ENCODE measurements at regions of chr12 and their contacts with region 1.

Region 1: GRCh38 chr12:125065021-125065795 is at the start of gene AACS:
- DNase-seq: peak; percentile 66 to 89 (median 74)
- ATAC-seq: peak; percentile 95
- H3K4me3 ChIP-seq: peak within 1 kb of the TSS; percentile 64
- H3K4me3 Mint-ChIP-seq: peak within 1 kb of the TSS; percentile 93
- H3K27ac ChIP-seq: no peak within 1 kb of the TSS
- H3K27ac Mint-ChIP-seq: peak within 1 kb of the TSS; percentile 30
- H3K4me1 ChIP-seq: peaks cover 18% of the 10 kb centered on the region
- H3K4me1 Mint-ChIP-seq: peaks cover 20% of the 10 kb centered on the region
- H3K27me3 ChIP-seq: no peaks in the 10 kb centered on the region
- H3K27me3 Mint-ChIP-seq: no peaks in the 10 kb centered on the region
- CTCF ChIP-seq: no peak
- total RNA-seq, gene AACS: 10.8 to 11.7 TPM

Region 2: GRCh38 chr12:124863416-124864325 is 201.5 kb before region 1 on chr12 and contains the start of gene SCARB1:
- CTCF ChIA-PET with region 1: no interaction called
- POLR2A ChIA-PET with region 1: no interaction called
- intact Hi-C with region 1: loop called in 1 of 2 experiments (anchors 10 kb)
- DNase-seq: peak; percentile 53 to 88 (median 71)
- ATAC-seq: peak; percentile 89
- H3K4me3 ChIP-seq: peak within 1 kb of the TSS; percentile 51
- H3K4me3 Mint-ChIP-seq: peak within 1 kb of the TSS; percentile 91
- H3K27ac ChIP-seq: no peak within 1 kb of the TSS
- H3K27ac Mint-ChIP-seq: peak within 1 kb of the TSS; percentile 76
- H3K4me1 ChIP-seq: peaks cover 18% of the 10 kb centered on the region
- H3K4me1 Mint-ChIP-seq: peaks cover 20% of the 10 kb centered on the region
- H3K27me3 ChIP-seq: no peaks in the 10 kb centered on the region
- H3K27me3 Mint-ChIP-seq: no peaks in the 10 kb centered on the region
- CTCF ChIP-seq: no peak
- total RNA-seq, gene SCARB1: 2.3 to 3.7 TPM

Region 3: GRCh38 chr12:125049093-125049458 is 16.1 kb before region 1 on chr12:
- CTCF ChIA-PET with region 1: interaction called, 4 read pairs
- POLR2A ChIA-PET with region 1: interaction called, 21 read pairs
- intact Hi-C with region 1: loop called (anchors 1 kb)
- DNase-seq: no peak
- ATAC-seq: no peak
- H3K4me3 ChIP-seq: peak overlapping the region; percentile 66
- H3K4me3 Mint-ChIP-seq: peak overlapping the region; percentile 87
- H3K27ac ChIP-seq: no peak overlapping the region
- H3K27ac Mint-ChIP-seq: peak overlapping the region; percentile 84
- H3K4me1 ChIP-seq: peaks cover 13% of the 10 kb centered on the region
- H3K4me1 Mint-ChIP-seq: peaks cover 12% of the 10 kb centered on the region
- H3K27me3 ChIP-seq: no peaks in the 10 kb centered on the region
- H3K27me3 Mint-ChIP-seq: no peaks in the 10 kb centered on the region
- CTCF ChIP-seq: no peak

Region 4: GRCh38 chr12:125092872-125093680 is 27.9 kb after region 1 on chr12:
- CTCF ChIA-PET with region 1: no interaction called
- POLR2A ChIA-PET with region 1: no interaction called
- intact Hi-C with region 1: no loop called
- DNase-seq: no peak
- ATAC-seq: no peak
- H3K4me3 ChIP-seq: no peak overlapping the region
- H3K4me3 Mint-ChIP-seq: no peak overlapping the region
- H3K27ac ChIP-seq: no peak overlapping the region
- H3K27ac Mint-ChIP-seq: no peak overlapping the region
- H3K4me1 ChIP-seq: no peaks in the 10 kb centered on the region
- H3K4me1 Mint-ChIP-seq: peaks cover 14% of the 10 kb centered on the region
- H3K27me3 ChIP-seq: peaks cover 0 to 2% of the 10 kb centered on the region in 2 experiments
- H3K27me3 Mint-ChIP-seq: no peaks in the 10 kb centered on the region
- CTCF ChIP-seq: no peak

Region 5: DNA sequence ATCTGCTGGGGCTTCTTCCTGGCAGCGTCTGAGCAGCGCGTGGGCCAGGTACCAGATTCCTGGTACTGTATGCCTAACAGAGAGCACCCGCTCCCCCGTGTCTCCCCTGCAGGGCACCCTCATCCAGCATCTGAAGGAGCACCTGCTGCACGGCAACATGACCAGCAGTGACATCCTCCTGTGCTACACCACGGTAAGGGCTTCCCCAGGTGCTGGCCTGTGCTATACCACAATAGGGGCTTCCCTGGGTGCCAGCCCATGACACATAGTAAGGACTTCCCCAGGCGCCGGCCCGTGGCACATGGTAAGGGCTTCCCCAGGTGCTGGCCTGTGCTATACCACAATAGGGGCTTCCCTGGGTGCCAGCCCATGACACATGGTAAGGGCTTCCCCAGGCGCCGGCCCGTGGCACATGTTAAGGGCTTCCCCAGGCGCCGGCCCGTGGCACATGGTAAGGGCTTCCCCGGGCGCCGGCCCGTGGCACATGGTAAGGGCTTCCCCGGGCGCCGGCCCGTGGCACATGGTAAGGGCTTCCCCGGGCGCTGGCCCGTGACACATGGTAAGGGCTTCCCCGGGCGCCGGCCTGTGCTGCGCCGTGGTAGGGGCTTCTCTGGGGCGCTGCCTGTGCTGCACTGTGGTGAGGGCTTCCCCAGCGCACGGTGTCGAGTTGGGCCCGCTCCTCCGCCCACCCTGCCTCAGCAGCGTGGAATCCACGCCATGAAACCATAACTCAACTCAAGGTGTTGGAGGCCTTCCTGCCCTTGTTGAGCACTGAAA is 49.3 kb after region 1 on chr12:
- CTCF ChIA-PET with region 1: no interaction called
- POLR2A ChIA-PET with region 1: no interaction called
- intact Hi-C with region 1: no loop called
- DNase-seq: no peak
- ATAC-seq: no peak
- H3K4me3 ChIP-seq: no peak overlapping the region
- H3K4me3 Mint-ChIP-seq: no peak overlapping the region
- H3K27ac ChIP-seq: no peak overlapping the region
- H3K27ac Mint-ChIP-seq: no peak overlapping the region
- H3K4me1 ChIP-seq: no peaks in the 10 kb centered on the region
- H3K4me1 Mint-ChIP-seq: no peaks in the 10 kb centered on the region
- H3K27me3 ChIP-seq: no peaks in the 10 kb centered on the region
- H3K27me3 Mint-ChIP-seq: no peaks in the 10 kb centered on the region
- CTCF ChIP-seq: no peak

Region 6: DNA sequence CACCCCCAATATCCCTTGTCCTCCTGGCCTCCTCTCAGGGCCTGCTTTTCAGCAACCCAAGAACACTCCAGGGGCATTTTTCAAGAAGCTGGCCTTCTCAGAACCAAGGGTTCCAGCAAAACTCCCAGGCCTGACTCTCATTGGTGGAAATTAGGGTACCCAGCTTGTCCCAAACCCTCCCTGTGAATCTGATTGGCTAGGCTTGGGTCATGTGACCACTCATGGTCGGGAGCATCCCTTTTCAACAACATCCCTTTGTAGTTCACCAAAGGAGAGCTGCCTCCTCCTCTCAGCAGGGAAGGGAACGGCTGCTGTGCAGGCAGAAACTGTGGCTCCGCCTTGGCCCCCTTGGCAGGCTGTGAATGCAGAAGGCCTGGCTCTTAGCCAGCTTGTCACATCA is 94.5 kb after region 1 on chr12:
- CTCF ChIA-PET with region 1: no interaction called
- POLR2A ChIA-PET with region 1: no interaction called
- intact Hi-C with region 1: no loop called
- DNase-seq: no peak
- ATAC-seq: no peak
- H3K4me3 ChIP-seq: no peak overlapping the region
- H3K4me3 Mint-ChIP-seq: no peak overlapping the region
- H3K27ac ChIP-seq: no peak overlapping the region
- H3K27ac Mint-ChIP-seq: no peak overlapping the region
- H3K4me1 ChIP-seq: no peaks in the 10 kb centered on the region
- H3K4me1 Mint-ChIP-seq: no peaks in the 10 kb centered on the region
- H3K27me3 ChIP-seq: no peaks in the 10 kb centered on the region
- H3K27me3 Mint-ChIP-seq: no peaks in the 10 kb centered on the region
- CTCF ChIP-seq: no peak